Activated CD4-positive, alpha-beta memory T cell treated with anti-CD3 and anti-CD28 coated beads for 36 hours (primary cell): ENCODE measurements at regions of chr6 and their contacts with region 1.

Region 1: DNA sequence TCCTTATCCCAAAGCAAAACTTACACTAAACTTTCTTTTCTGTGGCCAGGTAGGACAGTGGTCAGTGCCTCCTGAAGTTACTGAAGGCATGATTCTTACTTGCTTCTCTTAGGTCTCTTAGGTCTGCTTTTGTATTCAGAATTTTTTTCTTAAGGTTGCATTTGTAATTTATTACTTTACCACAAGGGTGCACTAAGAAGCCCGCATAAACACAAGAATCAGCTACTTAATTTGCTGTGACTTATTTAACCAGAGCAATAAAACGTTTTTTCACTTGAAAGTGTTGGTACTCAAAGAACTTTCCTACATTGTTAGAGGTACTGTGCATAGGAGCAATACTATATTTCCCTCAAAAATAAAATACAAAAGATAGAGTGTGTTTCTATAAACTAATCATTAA is 75.4 kb upstream of the LAMA2 start:
- DNase-seq: no peak
- H3K4me3 Mint-ChIP-seq: no peak overlapping the region
- H3K27ac Mint-ChIP-seq: no peak overlapping the region
- H3K4me1 Mint-ChIP-seq: no peaks in the 10 kb centered on the region
- H3K27me3 Mint-ChIP-seq: no peaks in the 10 kb centered on the region

Region 2: DNA sequence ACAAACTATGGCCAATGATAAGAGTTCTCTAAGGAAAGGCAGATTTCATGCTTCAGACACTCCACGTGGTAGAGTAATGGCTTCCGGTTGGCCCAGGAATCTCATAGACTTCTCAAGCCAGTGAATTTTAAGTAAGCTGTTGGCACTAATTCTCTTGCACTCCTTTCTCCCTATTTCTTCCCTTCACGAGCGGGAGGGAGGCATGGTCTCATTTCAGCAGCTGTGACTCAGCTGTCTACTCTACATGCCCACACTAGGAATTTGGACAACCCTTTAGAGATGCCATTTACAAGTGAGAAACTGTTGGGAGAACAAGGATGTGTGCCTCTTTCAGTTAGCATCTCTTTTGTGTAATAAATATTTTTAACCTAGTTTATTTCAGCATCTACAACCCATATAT is 394.9 kb before region 1 on chr6:
- CTCF ChIA-PET with region 1: no interaction called
- POLR2A ChIA-PET with region 1: no interaction called
- intact Hi-C with region 1: no loop called
- DNase-seq: no peak
- H3K4me3 Mint-ChIP-seq: no peak overlapping the region
- H3K27ac Mint-ChIP-seq: no peak overlapping the region
- H3K4me1 Mint-ChIP-seq: no peaks in the 10 kb centered on the region
- H3K27me3 Mint-ChIP-seq: no peaks in the 10 kb centered on the region

Region 3: GRCh38 chr6:129251669-129252376 is 444.2 kb after region 1 on chr6:
- CTCF ChIA-PET with region 1: interaction called, 3 read pairs
- POLR2A ChIA-PET with region 1: no interaction called
- intact Hi-C with region 1: loop called (anchors 1 kb)
- DNase-seq: peak; percentile 61
- H3K4me3 Mint-ChIP-seq: no peak overlapping the region
- H3K27ac Mint-ChIP-seq: no peak overlapping the region
- H3K4me1 Mint-ChIP-seq: peaks cover 17% of the 10 kb centered on the region
- H3K27me3 Mint-ChIP-seq: peaks cover 17% of the 10 kb centered on the region